Ascending aorta (tissue), 2 donors: ENCODE measurements at regions of chr9 and their contacts with region 1.

Region 1: DNA sequence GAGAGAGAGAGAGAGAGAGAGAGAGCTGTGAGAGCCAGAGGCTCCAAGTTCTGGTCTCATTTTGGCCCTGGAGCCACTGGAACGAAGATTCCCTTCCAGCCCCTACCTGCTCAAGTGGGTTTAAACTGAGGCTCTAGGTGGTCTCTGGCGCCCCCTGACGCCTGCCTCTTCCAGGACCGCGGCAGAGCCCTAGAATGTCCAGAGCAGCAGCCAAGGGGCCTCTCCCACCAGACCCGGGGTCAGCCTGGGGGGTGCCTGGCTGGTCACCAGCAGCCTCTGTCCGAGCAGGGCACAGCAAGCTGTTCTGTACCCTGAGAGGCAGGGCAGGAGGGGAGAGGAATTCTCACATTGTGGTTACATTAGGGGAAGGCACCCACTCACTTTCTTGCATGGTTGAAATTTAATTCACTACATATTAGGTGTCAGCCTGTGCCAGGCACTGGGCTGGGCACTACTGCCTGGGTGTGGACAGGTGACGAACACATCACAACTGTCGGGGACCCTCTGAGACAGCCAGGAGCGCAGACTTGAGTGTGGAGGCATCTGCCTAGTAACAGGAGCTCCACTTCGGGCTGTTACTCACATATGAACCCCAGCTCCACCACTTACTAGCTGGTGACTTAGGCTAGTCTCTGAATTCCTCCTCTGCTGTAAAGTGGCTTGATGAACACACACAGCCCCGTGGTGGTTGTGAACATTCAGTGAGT is 44.5 kb downstream of the AMBP start:
- DNase-seq: peak in 1 of 2 donors; percentile 64
- H3K4me3 ChIP-seq: no peak overlapping the region
- H3K27ac ChIP-seq: no peak overlapping the region
- H3K4me1 ChIP-seq: peaks cover 0 to 13% of the 10 kb centered on the region in 2 donors
- H3K27me3 ChIP-seq: no peaks in the 10 kb centered on the region
- CTCF ChIP-seq: peak; percentile 40 to 59 (median 52)

Region 2: GRCh38 chr9:113682297-113682771 is 351.2 kb before region 1 on chr9:
- intact Hi-C with region 1: loop called (anchors 2 kb)
- DNase-seq: peak in 1 of 2 donors; percentile 89
- H3K4me3 ChIP-seq: no peak overlapping the region
- H3K27ac ChIP-seq: no peak overlapping the region
- H3K4me1 ChIP-seq: no peaks in the 10 kb centered on the region
- H3K27me3 ChIP-seq: no peaks in the 10 kb centered on the region
- CTCF ChIP-seq: peak; percentile 72 to 92 (median 90)

Region 3: DNA sequence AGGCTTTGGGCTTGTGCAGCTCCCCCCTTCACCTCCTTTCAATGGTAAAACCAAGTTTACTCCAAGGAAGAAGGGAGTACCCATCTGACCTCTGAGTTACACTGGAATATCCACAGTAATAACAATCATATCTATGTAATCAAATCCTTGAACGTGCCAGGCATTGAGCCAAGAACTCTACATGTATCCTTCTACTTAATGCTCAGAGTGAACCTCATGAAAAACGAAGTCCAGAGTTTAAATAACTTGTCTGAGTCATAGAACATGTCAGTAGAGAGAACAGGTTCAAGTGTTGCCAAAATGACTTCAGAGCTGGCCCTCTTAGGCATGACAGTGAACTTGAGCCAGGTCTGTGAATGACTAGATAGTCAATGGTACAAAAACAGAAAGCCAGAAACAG is 321.5 kb before region 1 on chr9:
- intact Hi-C with region 1: no loop called
- DNase-seq: peak in 1 of 2 donors; percentile 4
- H3K4me3 ChIP-seq: no peak overlapping the region
- H3K27ac ChIP-seq: no peak overlapping the region
- H3K4me1 ChIP-seq: no peaks in the 10 kb centered on the region
- H3K27me3 ChIP-seq: no peaks in the 10 kb centered on the region
- CTCF ChIP-seq: no peak

Region 4: DNA sequence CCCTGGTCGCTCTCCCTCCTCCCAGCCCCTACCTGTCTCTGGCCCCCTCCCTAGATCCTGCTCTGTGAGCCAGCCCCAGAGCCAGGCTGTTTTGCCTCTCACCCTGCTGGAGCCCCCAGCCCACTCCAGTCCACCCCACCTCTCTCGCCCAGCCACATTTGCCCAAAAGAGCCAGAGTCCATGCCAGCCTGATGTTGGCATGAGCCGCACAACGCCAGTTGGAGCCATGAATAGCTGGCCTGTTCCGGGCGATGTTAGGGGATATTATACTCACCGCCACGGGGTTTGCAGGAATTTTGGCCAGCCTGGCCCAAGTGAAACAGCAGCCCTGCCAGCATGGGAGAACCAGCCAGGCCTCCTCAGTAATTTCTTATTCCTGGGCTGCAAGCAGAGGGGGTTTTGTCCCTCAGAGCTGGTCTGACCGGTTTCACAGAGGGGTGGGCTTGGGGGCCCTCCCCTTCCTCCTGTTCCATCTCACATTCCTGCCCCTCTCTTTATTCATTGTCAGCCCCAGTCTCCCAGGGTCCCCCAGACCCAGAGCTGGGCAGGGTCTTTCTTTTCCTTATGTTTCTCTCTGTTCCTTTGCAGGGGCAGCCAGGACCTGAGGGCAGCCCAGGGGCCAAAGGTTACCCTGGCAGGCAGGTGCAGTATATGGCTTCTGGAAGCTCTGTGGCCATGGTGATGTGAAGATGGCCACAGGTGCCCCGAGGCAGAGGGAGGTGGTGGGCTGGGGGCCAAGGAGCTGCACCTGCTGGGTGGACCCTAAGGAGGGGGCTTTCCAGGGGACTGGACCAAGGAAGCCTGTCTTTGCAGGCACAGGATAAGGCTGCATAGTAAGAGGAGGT is 171.8 kb after region 1 on chr9:
- intact Hi-C with region 1: no loop called
- DNase-seq: peak; percentile 61 to 89
- H3K4me3 ChIP-seq: peak overlapping the region in 1 of 2 donors; percentile 3
- H3K27ac ChIP-seq: peak overlapping the region; percentile 34 to 86
- H3K4me1 ChIP-seq: peaks cover 19 to 37% of the 10 kb centered on the region in 2 donors
- H3K27me3 ChIP-seq: no peaks in the 10 kb centered on the region
- CTCF ChIP-seq: no peak